ENCODE measurements at regions of chr2 and their contacts with region 1.

Region 1: DNA sequence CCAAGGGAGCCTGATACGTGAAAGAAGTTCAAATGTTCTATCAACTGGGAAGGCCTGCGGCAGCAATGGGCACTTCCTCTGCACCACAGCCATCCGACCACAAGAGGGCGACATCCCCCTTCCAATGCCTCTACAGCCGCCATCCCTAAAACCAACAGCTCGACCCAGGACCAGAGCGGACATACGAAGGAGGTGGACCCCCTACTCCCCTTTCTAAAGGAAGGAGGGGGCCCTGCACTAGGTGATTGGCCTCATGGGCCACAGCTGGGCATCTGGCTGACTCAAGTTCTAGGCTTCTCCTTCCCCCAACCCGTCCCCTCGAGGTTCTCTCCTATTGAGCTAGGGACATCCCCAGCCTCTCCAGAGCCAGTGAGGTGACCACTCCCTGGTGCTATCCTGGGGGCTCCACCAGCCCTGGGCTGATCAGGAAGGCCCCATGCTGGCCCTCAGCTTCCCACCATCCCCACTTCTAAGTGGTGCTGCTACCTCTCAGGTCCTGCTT is 217.2 kb downstream of the TNS1 start:
- DNase-seq: peak; percentile 75 to 84
- H3K4me3 ChIP-seq: no peak overlapping the region
- H3K4me3 Mint-ChIP-seq: no peak overlapping the region
- H3K27ac Mint-ChIP-seq: no peak overlapping the region
- H3K4me1 ChIP-seq: no peaks in the 10 kb centered on the region
- H3K4me1 Mint-ChIP-seq: no peaks in the 10 kb centered on the region
- H3K27me3 ChIP-seq: no peaks in the 10 kb centered on the region
- H3K27me3 Mint-ChIP-seq: peaks cover 8% of the 10 kb centered on the region
- CTCF ChIP-seq: peak; percentile 96 to 97

Region 2: DNA sequence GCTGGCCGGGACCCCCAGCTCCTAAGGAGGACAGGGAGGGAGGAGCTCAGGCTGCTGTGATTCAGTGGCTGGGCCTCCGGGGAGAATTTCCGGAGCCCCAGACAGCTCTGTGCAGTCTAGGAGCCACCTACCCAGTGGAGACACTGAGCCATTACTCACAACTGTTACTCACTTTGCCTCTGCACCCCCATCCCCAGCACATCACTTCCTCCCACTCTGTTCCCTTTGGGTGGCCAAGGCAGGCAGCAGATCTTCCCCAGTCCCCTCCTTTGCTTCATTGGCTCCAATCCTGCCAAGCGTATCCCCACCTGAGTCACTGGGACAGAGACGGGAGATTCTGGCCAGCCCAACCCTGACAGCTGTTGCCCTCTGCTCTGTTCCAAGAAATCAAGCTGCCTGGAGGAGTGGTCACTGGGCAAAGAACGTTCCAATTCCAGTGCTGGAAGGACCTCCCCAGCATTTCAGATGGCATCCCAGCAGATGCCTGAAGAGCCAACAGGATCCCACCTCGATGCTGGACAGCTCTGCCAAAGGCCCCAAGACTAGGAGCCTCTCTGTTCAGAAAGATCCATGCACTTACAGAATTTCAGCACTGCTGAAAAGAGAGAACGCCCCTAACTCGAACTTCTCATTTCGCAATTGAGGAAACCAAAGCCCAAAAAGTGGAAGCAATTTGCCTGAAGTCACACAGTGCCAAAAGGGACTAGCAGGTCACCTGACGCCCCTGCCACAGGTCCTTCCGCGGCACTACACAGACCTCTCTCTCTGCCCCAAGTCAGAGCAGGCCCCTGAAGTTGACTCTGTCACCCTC is 148.9 kb after region 1 on chr2:
- CTCF ChIA-PET with region 1: interaction called, 3 read pairs
- POLR2A ChIA-PET with region 1: no interaction called
- intact Hi-C with region 1: loop called (anchors 5 kb)
- DNase-seq: no peak
- H3K4me3 ChIP-seq: no peak overlapping the region
- H3K4me3 Mint-ChIP-seq: no peak overlapping the region
- H3K27ac Mint-ChIP-seq: no peak overlapping the region
- H3K4me1 ChIP-seq: no peaks in the 10 kb centered on the region
- H3K4me1 Mint-ChIP-seq: no peaks in the 10 kb centered on the region
- H3K27me3 ChIP-seq: no peaks in the 10 kb centered on the region
- H3K27me3 Mint-ChIP-seq: no peaks in the 10 kb centered on the region
- CTCF ChIP-seq: no peak

Region 3: GRCh38 chr2:217993817-217994463 is 208.3 kb after region 1 on chr2:
- CTCF ChIA-PET with region 1: interaction called, 39 read pairs
- POLR2A ChIA-PET with region 1: no interaction called
- intact Hi-C with region 1: loop called (anchors 1 kb)
- DNase-seq: peak in 1 of 2 experiments; percentile 79
- H3K4me3 ChIP-seq: no peak overlapping the region
- H3K4me3 Mint-ChIP-seq: no peak overlapping the region
- H3K27ac Mint-ChIP-seq: no peak overlapping the region
- H3K4me1 ChIP-seq: peaks cover under 1% of the 10 kb centered on the region; the same call in 1 of the 2 replicates
- H3K4me1 Mint-ChIP-seq: peaks cover 3% of the 10 kb centered on the region
- H3K27me3 ChIP-seq: no peaks in the 10 kb centered on the region
- H3K27me3 Mint-ChIP-seq: no peaks in the 10 kb centered on the region
- CTCF ChIP-seq: peak; percentile 93 to 94

Region 4: GRCh38 chr2:218063486-218063885 is 277.9 kb after region 1 on chr2:
- CTCF ChIA-PET with region 1: interaction called, 28 read pairs
- POLR2A ChIA-PET with region 1: no interaction called
- intact Hi-C with region 1: loop called (anchors 1 kb)
- DNase-seq: no peak
- H3K4me3 ChIP-seq: no peak overlapping the region
- H3K4me3 Mint-ChIP-seq: no peak overlapping the region
- H3K27ac Mint-ChIP-seq: no peak overlapping the region
- H3K4me1 ChIP-seq: no peaks in the 10 kb centered on the region
- H3K4me1 Mint-ChIP-seq: peaks cover 6% of the 10 kb centered on the region
- H3K27me3 ChIP-seq: peaks cover 3% of the 10 kb centered on the region
- H3K27me3 Mint-ChIP-seq: peaks cover 45% of the 10 kb centered on the region
- CTCF ChIP-seq: no peak